Cardiac septum (tissue), 1 donor: ENCODE measurements at regions of chr9 and their contacts with region 1.

Region 1: DNA sequence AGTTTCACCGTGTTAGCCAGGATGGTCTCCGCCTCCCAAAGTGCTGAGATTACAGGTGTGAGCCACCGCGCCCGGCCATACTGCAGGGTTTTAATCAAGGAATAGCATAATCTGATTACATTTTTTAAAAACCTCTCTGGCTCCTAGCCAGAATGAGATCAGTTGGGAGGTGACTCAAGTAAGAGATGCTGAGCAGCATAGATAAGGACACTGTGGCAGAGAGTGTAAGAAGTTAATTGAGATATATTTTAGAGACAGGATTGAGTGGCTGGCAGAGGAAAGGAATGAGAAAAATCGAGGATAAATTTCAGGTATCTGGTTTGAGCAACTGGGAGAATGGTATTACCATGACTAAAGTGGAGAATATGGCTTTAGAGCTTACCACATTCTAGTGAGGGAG is 7.3 kb upstream of the RIGI start:
- DNase-seq: no peak

Region 2: GRCh38 chr9:32472344-32472743 is 61.0 kb before region 1 on chr9:
- intact Hi-C with region 1: loop called (anchors 10 kb)
- DNase-seq: no peak